GM13976 (cell line): ENCODE measurements at regions of chr5 and their contacts with region 1.

Region 1: GRCh38 chr5:125412561-125413495 is 666.4 kb upstream of the ZNF608 start:
- DNase-seq: peak; percentile 22
- CTCF ChIP-seq: no peak

Region 2: GRCh38 chr5:124935065-124935464 is 477.8 kb before region 1 on chr5:
- in situ Hi-C with region 1: loop called (anchors 25 kb)
- DNase-seq: peak; percentile 49
- CTCF ChIP-seq: no peak

Region 3: GRCh38 chr5:125152044-125152443 is 260.8 kb before region 1 on chr5:
- in situ Hi-C with region 1: no loop called
- DNase-seq: no peak
- CTCF ChIP-seq: no peak

Region 4: GRCh38 chr5:125311743-125312142 is 101.1 kb before region 1 on chr5:
- in situ Hi-C with region 1: no loop called
- DNase-seq: no peak
- CTCF ChIP-seq: no peak

Region 5: GRCh38 chr5:125961150-125961549 is 548.3 kb after region 1 on chr5:
- in situ Hi-C with region 1: no loop called
- DNase-seq: no peak
- CTCF ChIP-seq: no peak